ENCODE measurements at regions of chr3 and their contacts with region 1.

Region 1: GRCh38 chr3:36911990-36912804 is 32.7 kb downstream of the TRANK1 start:
- DNase-seq: peak in 5 of 9 experiments; percentile 24 to 82 (median 50)
- ATAC-seq: peak; percentile 77
- H3K4me3 ChIP-seq: peak overlapping the region; percentile 24 to 32
- H3K4me3 Mint-ChIP-seq: peak overlapping the region; percentile 69
- H3K27ac ChIP-seq: peak overlapping the region; percentile 48 to 84
- H3K27ac Mint-ChIP-seq: peak overlapping the region; percentile 66
- H3K4me1 ChIP-seq: peaks cover 24% of the 10 kb centered on the region
- H3K4me1 Mint-ChIP-seq: peaks cover 41% of the 10 kb centered on the region
- H3K27me3 ChIP-seq: no peaks in the 10 kb centered on the region
- H3K27me3 Mint-ChIP-seq: no peaks in the 10 kb centered on the region
- CTCF ChIP-seq: no peak

Region 2: DNA sequence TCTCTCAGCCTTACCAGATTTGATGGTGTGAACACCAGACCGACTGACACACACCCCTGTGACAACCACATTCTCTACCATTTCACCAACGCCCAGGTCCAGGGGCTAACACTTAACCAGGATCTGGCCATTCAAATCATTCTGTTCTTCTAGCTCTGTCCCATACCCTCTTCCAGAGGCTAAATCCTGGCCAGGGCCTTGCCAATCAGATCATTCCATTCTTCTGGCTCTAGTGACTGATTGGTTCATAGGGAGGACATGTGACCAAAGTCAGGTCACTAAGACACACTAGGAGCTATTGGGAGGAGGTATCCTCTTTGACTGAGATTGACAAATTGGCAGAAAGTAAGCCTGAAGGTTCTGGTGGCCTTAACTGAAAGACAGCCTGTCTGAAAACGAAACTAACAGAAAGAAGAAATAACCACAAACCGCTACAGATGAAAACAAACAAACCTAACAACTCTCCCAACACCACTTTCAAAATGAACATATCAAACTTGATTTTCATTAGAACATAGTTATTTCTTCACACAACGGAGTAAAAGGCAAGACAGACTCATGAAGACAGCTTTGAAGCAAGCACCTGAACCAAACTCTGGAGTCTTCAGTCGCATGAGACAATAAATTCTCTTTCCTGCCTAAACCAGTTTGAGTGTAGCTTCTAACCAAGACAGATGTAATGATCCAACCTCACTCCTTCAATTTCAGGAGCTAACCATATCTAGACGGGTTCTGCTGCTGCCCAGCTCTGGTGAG is 35.8 kb before region 1 on chr3:
- CTCF ChIA-PET with region 1: interaction called, 12 read pairs
- POLR2A ChIA-PET with region 1: interaction called, 12 read pairs
- intact Hi-C with region 1: loop called (anchors 5 kb)
- DNase-seq: peak in 4 of 9 experiments; percentile 33 to 88 (median 67)
- ATAC-seq: peak; percentile 91
- H3K4me3 ChIP-seq: peak overlapping the region; percentile 5 to 32
- H3K4me3 Mint-ChIP-seq: peak overlapping the region; percentile 73
- H3K27ac ChIP-seq: peak overlapping the region; percentile 77 to 91
- H3K27ac Mint-ChIP-seq: peak overlapping the region; percentile 97
- H3K4me1 ChIP-seq: peaks cover 42% of the 10 kb centered on the region
- H3K4me1 Mint-ChIP-seq: peaks cover 55% of the 10 kb centered on the region
- H3K27me3 ChIP-seq: no peaks in the 10 kb centered on the region
- H3K27me3 Mint-ChIP-seq: no peaks in the 10 kb centered on the region
- CTCF ChIP-seq: no peak

Region 3: DNA sequence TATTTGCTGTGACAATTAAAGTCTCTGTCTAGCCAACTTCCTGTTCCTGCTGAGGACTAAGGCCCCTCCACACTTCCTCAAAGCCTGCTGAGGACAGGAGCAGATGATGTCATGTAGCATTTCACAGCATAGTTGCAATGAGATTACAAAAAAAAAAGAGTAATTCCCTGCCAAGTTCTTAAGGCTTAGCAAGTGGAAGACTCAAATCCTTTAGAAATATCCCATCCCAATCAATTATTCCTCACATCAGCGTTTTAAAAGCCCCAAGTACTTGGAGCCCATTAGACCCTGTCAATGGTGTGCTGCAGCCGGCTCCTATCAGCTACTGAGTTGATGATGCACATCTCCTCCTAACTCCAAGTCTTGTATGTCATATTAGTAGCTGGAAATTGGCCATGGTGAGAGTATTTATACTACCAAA is 19.1 kb before region 1 on chr3:
- CTCF ChIA-PET with region 1: interaction called, 7 read pairs
- POLR2A ChIA-PET with region 1: interaction called, 17 read pairs
- intact Hi-C with region 1: loop called in 1 of 2 experiments (anchors 2 kb)
- DNase-seq: peak in 4 of 9 experiments; percentile 26 to 84 (median 70)
- ATAC-seq: peak; percentile 95
- H3K4me3 ChIP-seq: no peak overlapping the region
- H3K4me3 Mint-ChIP-seq: peak overlapping the region; percentile 26
- H3K27ac ChIP-seq: peak overlapping the region; percentile 28 to 68
- H3K27ac Mint-ChIP-seq: peak overlapping the region; percentile 92
- H3K4me1 ChIP-seq: peaks cover 41% of the 10 kb centered on the region
- H3K4me1 Mint-ChIP-seq: peaks cover 55% of the 10 kb centered on the region
- H3K27me3 ChIP-seq: no peaks in the 10 kb centered on the region
- H3K27me3 Mint-ChIP-seq: no peaks in the 10 kb centered on the region
- CTCF ChIP-seq: no peak

Region 4: DNA sequence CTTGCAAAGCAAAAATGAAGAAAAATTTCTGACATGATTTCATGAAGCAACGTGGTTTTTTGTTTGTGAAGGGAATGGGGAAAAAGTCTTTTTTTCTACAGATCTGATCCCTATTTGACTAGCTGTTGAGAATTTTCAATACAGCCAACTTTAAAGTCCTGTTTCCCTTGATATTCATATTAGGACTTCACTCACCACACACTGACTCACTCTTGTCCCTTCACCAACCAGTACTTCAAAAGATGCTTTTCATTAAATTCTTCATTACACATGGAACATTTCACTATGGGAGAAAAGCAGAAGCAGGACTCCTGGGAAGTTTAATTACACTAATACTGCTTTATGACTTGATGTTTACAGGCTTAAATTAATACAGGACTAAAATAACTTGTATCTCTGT is 16.0 kb after region 1 on chr3:
- CTCF ChIA-PET with region 1: interaction called, 3 read pairs
- POLR2A ChIA-PET with region 1: no interaction called
- intact Hi-C with region 1: loop called in 1 of 2 experiments (anchors 1 kb)
- DNase-seq: no peak
- ATAC-seq: no peak
- H3K4me3 ChIP-seq: no peak overlapping the region
- H3K4me3 Mint-ChIP-seq: no peak overlapping the region
- H3K27ac ChIP-seq: no peak overlapping the region
- H3K27ac Mint-ChIP-seq: no peak overlapping the region
- H3K4me1 ChIP-seq: no peaks in the 10 kb centered on the region
- H3K4me1 Mint-ChIP-seq: peaks cover 9% of the 10 kb centered on the region
- H3K27me3 ChIP-seq: no peaks in the 10 kb centered on the region
- H3K27me3 Mint-ChIP-seq: no peaks in the 10 kb centered on the region
- CTCF ChIP-seq: no peak

Region 5: GRCh38 chr3:36944012-36944640 is 31.9 kb after region 1 on chr3:
- CTCF ChIA-PET with region 1: interaction called, 4 read pairs
- POLR2A ChIA-PET with region 1: interaction called, 9 read pairs
- intact Hi-C with region 1: loop called (anchors 1 to 2 kb)
- DNase-seq: peak in 7 of 9 experiments; percentile 27 to 66 (median 40)
- ATAC-seq: peak; percentile 34
- H3K4me3 ChIP-seq: peak overlapping the region; percentile 79 to 82
- H3K4me3 Mint-ChIP-seq: peak overlapping the region; percentile 83
- H3K27ac ChIP-seq: peak overlapping the region; percentile 22 to 68
- H3K27ac Mint-ChIP-seq: peak overlapping the region; percentile 82
- H3K4me1 ChIP-seq: peaks cover 13% of the 10 kb centered on the region
- H3K4me1 Mint-ChIP-seq: peaks cover 23% of the 10 kb centered on the region
- H3K27me3 ChIP-seq: no peaks in the 10 kb centered on the region
- H3K27me3 Mint-ChIP-seq: no peaks in the 10 kb centered on the region
- CTCF ChIP-seq: no peak

Region 6: DNA sequence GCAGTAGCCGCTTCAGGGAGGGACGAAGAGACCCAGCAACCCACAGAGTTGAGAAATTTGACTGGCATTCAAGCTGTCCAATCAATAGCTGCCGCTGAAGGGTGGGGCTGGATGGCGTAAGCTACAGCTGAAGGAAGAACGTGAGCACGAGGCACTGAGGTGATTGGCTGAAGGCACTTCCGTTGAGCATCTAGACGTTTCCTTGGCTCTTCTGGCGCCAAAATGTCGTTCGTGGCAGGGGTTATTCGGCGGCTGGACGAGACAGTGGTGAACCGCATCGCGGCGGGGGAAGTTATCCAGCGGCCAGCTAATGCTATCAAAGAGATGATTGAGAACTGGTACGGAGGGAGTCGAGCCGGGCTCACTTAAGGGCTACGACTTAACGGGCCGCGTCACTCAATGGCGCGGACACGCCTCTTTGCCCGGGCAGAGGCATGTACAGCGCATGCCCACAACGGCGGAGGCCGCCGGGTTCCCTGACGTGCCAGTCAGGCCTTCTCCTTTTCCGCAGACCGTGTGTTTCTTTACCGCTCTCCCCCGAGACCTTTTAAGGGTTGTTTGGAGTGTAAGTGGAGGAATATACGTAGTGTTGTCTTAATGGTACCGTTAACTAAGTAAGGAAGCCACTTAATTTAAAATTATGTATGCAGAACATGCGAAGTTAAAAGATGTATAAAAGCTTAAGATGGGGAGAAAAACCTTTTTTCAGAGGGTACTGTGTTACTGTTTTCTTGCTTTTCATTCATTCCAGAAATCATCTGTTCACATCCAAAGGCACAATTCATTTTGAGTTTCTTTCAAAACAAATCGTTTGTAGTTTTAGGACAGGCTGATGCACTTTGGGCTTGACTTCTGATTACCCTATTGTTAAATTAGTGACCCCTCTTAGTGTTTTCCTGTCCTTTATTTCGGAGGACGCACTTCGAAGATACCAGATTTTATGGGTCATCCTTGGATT is 81.4 kb after region 1 on chr3 and contains the start of gene MLH1:
- CTCF ChIA-PET with region 1: no interaction called
- POLR2A ChIA-PET with region 1: interaction called, 3 read pairs
- intact Hi-C with region 1: loop called (anchors 2 kb)
- DNase-seq: peak in 8 of 9 experiments; percentile 95 to 100 (median 97)
- ATAC-seq: peak; percentile 81
- H3K4me3 ChIP-seq: peak within 1 kb of the TSS; percentile 58 to 77
- H3K4me3 Mint-ChIP-seq: no peak within 1 kb of the TSS
- H3K27ac ChIP-seq: peak within 1 kb of the TSS; percentile 89 to 99
- H3K27ac Mint-ChIP-seq: no peak within 1 kb of the TSS
- H3K4me1 ChIP-seq: peaks cover 44% of the 10 kb centered on the region
- H3K4me1 Mint-ChIP-seq: peaks cover 35% of the 10 kb centered on the region
- H3K27me3 ChIP-seq: no peaks in the 10 kb centered on the region
- H3K27me3 Mint-ChIP-seq: no peaks in the 10 kb centered on the region
- CTCF ChIP-seq: no peak
- total RNA-seq, gene MLH1: 21.4 to 23.9 TPM

Region 7: DNA sequence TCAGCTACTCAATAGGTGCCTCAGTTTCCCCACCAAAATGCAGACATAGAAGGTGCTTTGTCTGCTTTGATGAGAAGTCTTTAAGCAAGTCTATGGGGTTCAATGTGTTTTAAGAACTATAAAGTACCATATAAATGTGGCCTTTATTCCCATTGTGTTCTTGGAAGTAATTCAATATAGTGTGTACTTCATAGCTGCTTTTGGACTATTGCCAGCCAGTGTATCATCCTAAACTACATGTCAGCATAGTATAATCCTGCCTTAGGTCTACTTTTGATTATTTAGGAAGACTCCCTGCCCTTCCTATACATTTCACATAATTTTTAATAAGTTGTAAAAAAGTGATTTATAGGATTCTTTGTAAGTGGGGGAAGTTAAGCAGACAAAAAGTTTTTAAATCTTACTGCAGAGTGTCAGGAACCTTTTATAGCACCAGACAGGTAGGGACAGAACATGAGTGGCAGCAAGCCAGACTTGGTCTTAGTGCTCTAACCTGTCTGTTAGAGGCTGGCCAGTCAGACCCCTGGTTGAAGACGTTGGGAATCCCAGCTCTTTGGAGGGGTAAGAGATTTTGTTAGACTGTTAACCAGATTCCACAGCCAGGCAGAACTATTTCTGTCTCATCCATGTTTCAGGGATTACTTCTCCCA is 129.5 kb after region 1 on chr3:
- CTCF ChIA-PET with region 1: no interaction called
- POLR2A ChIA-PET with region 1: no interaction called
- intact Hi-C with region 1: no loop called
- DNase-seq: no peak
- ATAC-seq: no peak
- H3K4me3 ChIP-seq: no peak overlapping the region
- H3K4me3 Mint-ChIP-seq: no peak overlapping the region
- H3K27ac ChIP-seq: no peak overlapping the region
- H3K27ac Mint-ChIP-seq: no peak overlapping the region
- H3K4me1 ChIP-seq: no peaks in the 10 kb centered on the region
- H3K4me1 Mint-ChIP-seq: no peaks in the 10 kb centered on the region
- H3K27me3 ChIP-seq: no peaks in the 10 kb centered on the region
- H3K27me3 Mint-ChIP-seq: no peaks in the 10 kb centered on the region
- CTCF ChIP-seq: no peak

Measured in CD8-positive, alpha-beta T cell (primary cell).